Gastrocnemius medialis (tissue), 4 donors: ENCODE measurements at regions of chrX and their contacts with region 1.

Region 1: GRCh38 chrX:82842286-82842685 is 665.8 kb upstream of the POU3F4 start:
- DNase-seq: no peak
- ATAC-seq: no peak
- H3K4me3 ChIP-seq: no peak overlapping the region
- H3K27ac ChIP-seq: no peak overlapping the region
- H3K4me1 ChIP-seq: no peaks in the 10 kb centered on the region
- H3K27me3 ChIP-seq: no peaks in the 10 kb centered on the region
- CTCF ChIP-seq: no peak
- POLR2A ChIP-seq: no peak

Region 2: GRCh38 chrX:82556588-82556987 is 285.7 kb before region 1 on chrX:
- in situ Hi-C with region 1: no loop called
- intact Hi-C with region 1: no loop called
- DNase-seq: no peak
- ATAC-seq: no peak
- H3K4me3 ChIP-seq: no peak overlapping the region
- H3K27ac ChIP-seq: no peak overlapping the region
- H3K4me1 ChIP-seq: no peaks in the 10 kb centered on the region
- H3K27me3 ChIP-seq: peaks cover 0 to 2% (median 0%) of the 10 kb centered on the region in 3 donors
- CTCF ChIP-seq: no peak
- POLR2A ChIP-seq: no peak

Region 3: DNA sequence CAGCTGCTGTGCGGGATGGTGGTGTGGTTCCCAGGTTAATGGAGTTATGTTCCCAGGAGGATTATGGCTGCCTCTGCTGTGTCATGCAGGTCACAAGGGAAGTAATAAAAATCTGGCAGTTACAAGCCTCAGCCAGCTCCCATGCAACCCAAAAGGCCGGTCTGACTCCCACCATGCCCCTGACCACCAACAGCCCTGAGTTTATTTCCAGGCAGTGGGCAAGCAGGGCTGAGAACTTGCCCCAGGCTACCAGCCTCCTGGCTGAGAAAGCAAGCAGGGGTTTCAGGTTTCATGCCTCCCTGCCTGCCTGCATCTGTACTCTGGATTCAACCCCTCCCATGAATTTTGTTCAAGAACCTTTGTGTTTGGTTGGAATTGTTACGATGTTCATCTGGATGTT is 66.9 kb before region 1 on chrX:
- in situ Hi-C with region 1: loop called in 1 of 4 experiments (anchors 10 kb)
- intact Hi-C with region 1: no loop called
- DNase-seq: no peak
- ATAC-seq: no peak
- H3K4me3 ChIP-seq: no peak overlapping the region
- H3K27ac ChIP-seq: no peak overlapping the region
- H3K4me1 ChIP-seq: no peaks in the 10 kb centered on the region
- H3K27me3 ChIP-seq: no peaks in the 10 kb centered on the region
- CTCF ChIP-seq: no peak
- POLR2A ChIP-seq: no peak